HepG2 (cell line): ENCODE measurements at regions of chr18 and their contacts with region 1.

Region 1: GRCh38 chr18:46213295-46213694 is 109.1 kb downstream of the HAUS1 start:
- DNase-seq: peak; percentile 5
- ATAC-seq: no peak
- H3K4me3 ChIP-seq: no peak overlapping the region
- H3K27ac ChIP-seq: no peak overlapping the region
- H3K4me1 ChIP-seq: no peaks in the 10 kb centered on the region
- H3K27me3 ChIP-seq: no peaks in the 10 kb centered on the region; a peak in 1 of 5 replicates
- CTCF ChIP-seq: peak; percentile 37
- EP300 ChIP-seq: no peak
- POLR2A ChIP-seq: no peak
- RAD21 ChIP-seq: peak; percentile 37; the same call in 1 of the 2 replicates

Region 2: DNA sequence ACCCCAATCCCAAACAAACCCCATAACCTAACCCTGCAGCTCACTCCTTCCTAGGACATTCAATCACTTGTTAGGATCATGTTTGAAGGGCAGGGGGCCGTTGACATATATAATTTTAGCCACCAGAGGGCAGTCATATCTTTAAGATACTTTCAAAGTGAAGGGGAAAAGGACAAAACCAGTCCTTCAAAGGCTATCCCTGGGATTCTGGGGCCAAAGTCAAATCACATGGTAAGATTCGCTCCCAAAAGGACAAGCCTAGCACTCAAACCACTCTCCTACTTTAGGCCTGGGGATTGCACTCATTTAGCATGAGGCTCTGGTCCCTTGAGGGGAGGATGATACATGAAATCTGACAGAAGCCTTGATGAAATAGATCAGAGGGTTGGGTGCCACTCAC is 64.5 kb before region 1 on chr18:
- CTCF ChIA-PET with region 1: interaction called, 13 read pairs
- POLR2A ChIA-PET with region 1: no interaction called
- in situ Hi-C with region 1: no loop called
- intact Hi-C with region 1: loop called (anchors 1 kb)
- DNase-seq: peak; percentile 59
- ATAC-seq: peak; percentile 81
- H3K4me3 ChIP-seq: no peak overlapping the region
- H3K27ac ChIP-seq: no peak overlapping the region
- H3K4me1 ChIP-seq: peaks cover 20% of the 10 kb centered on the region
- H3K27me3 ChIP-seq: no peaks in the 10 kb centered on the region; a peak in 2 of 5 replicates
- CTCF ChIP-seq: peak; percentile 77
- EP300 ChIP-seq: no peak
- POLR2A ChIP-seq: no peak
- RAD21 ChIP-seq: 0 out of 2 replicates have a peak, but pooled peaks have one; percentile 24

Region 3: GRCh38 chr18:46173393-46174341 is 39.6 kb before region 1 on chr18:
- CTCF ChIA-PET with region 1: interaction called, 40 read pairs
- POLR2A ChIA-PET with region 1: interaction called, 3 read pairs
- in situ Hi-C with region 1: no loop called
- intact Hi-C with region 1: loop called (anchors 1 kb)
- DNase-seq: peak; percentile 87
- ATAC-seq: peak; percentile 91
- H3K4me3 ChIP-seq: peak overlapping the region; percentile 83 to 98 (median 92)
- H3K27ac ChIP-seq: peak overlapping the region; percentile 86
- H3K4me1 ChIP-seq: peaks cover 46% of the 10 kb centered on the region
- H3K27me3 ChIP-seq: no peaks in the 10 kb centered on the region; a peak in 1 of 5 replicates
- CTCF ChIP-seq: peak; percentile 88
- EP300 ChIP-seq: 0 out of 4 replicates have a peak, but pooled peaks of 1 of the 2 experiments have one; percentile 11
- POLR2A ChIP-seq: peak; percentile 80 to 87
- RAD21 ChIP-seq: peak; percentile 86

Region 4: DNA sequence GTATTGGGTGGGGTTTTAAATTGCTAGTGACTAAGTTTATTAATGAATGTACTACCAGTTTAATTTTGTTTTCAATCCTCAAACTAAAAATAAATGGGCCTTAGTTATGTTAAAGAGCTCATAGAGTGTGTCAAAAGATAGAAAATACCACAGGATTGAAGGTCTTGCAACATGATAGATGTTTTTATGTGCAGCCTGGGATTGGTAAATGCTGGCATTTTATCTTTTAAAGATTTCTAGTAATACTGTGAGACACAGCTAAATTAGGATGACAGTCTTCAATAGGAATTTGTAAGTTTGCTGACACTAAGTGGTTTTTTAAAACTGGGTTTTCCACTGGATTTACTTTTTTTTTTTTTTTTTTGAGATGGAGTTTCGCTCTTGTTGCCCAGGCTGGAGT is 13.2 kb after region 1 on chr18:
- CTCF ChIA-PET with region 1: no interaction called
- POLR2A ChIA-PET with region 1: no interaction called
- in situ Hi-C with region 1: no loop called
- intact Hi-C with region 1: no loop called
- DNase-seq: no peak
- ATAC-seq: no peak
- H3K4me3 ChIP-seq: no peak overlapping the region
- H3K27ac ChIP-seq: no peak overlapping the region
- H3K4me1 ChIP-seq: no peaks in the 10 kb centered on the region
- H3K27me3 ChIP-seq: no peaks in the 10 kb centered on the region
- CTCF ChIP-seq: no peak
- EP300 ChIP-seq: no peak
- POLR2A ChIP-seq: no peak
- RAD21 ChIP-seq: no peak